MCF 10A (cell line): ENCODE measurements at regions of chr3 and their contacts with region 1.

Region 1: GRCh38 chr3:101676765-101677435 is at the start of gene ZBTB11:
- DNase-seq: peak; percentile 100
- H3K4me3 Mint-ChIP-seq: peak within 1 kb of the TSS; percentile 82
- H3K27ac Mint-ChIP-seq: peak within 1 kb of the TSS; percentile 93
- H3K4me1 Mint-ChIP-seq: peaks cover 35% of the 10 kb centered on the region
- H3K27me3 Mint-ChIP-seq: no peaks in the 10 kb centered on the region
- CTCF ChIP-seq: peak; percentile 36
- total RNA-seq, gene ZBTB11: 28.9 and 30.0 TPM in 2 replicates

Region 2: DNA sequence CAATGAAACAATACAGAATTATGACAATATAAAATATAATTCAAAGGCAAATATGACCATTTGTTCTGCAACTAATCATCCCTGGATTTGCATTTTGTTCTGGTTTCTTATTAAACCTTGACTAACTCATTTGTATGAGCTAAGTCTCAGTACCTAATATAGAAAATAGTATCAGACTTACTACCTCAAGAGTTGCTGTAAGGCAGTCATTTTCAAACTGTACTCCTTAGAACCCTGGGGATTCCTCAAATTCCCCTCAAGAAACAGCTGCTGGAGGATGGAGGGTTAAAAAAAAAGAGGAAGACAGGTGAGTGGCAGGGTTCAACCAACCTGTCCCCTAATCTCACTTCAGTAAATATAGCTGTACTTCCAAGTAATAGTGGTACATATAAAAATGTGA is 11.0 kb before region 1 on chr3:
- CTCF ChIA-PET with region 1: interaction called, 12 read pairs
- POLR2A ChIA-PET with region 1: interaction called, 8 read pairs
- intact Hi-C with region 1: no loop called
- DNase-seq: no peak
- H3K4me3 Mint-ChIP-seq: no peak overlapping the region
- H3K27ac Mint-ChIP-seq: peak overlapping the region; percentile 33
- H3K4me1 Mint-ChIP-seq: no peaks in the 10 kb centered on the region
- H3K27me3 Mint-ChIP-seq: no peaks in the 10 kb centered on the region
- CTCF ChIP-seq: no peak

Region 3: DNA sequence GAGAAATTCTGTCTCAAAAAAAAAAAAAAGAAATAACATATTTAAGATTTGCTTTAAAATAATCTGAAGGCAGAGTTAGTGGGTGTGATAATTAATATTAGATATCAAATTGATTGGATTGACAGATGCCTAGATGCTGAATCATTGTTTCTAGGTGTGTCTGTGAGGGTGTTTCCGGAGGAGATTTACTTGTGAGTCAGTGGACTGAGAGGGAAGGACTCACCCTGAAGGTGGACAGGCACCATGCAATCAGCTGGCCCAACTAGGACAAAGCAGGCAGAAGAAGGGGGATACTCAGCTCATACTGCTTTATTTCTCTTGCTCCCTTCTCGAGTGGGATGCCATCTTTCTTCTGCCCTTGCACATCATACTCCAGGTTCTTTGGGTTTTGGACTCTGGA is 26.3 kb after region 1 on chr3:
- CTCF ChIA-PET with region 1: interaction called, 7 read pairs
- POLR2A ChIA-PET with region 1: interaction called, 50 read pairs
- intact Hi-C with region 1: no loop called
- DNase-seq: peak; percentile 75
- H3K4me3 Mint-ChIP-seq: no peak overlapping the region
- H3K27ac Mint-ChIP-seq: peak overlapping the region; percentile 59
- H3K4me1 Mint-ChIP-seq: peaks cover 20% of the 10 kb centered on the region
- H3K27me3 Mint-ChIP-seq: no peaks in the 10 kb centered on the region
- CTCF ChIP-seq: no peak